AG04450 (cell line): ENCODE measurements at regions of chr6 and their contacts with region 1.

Region 1: DNA sequence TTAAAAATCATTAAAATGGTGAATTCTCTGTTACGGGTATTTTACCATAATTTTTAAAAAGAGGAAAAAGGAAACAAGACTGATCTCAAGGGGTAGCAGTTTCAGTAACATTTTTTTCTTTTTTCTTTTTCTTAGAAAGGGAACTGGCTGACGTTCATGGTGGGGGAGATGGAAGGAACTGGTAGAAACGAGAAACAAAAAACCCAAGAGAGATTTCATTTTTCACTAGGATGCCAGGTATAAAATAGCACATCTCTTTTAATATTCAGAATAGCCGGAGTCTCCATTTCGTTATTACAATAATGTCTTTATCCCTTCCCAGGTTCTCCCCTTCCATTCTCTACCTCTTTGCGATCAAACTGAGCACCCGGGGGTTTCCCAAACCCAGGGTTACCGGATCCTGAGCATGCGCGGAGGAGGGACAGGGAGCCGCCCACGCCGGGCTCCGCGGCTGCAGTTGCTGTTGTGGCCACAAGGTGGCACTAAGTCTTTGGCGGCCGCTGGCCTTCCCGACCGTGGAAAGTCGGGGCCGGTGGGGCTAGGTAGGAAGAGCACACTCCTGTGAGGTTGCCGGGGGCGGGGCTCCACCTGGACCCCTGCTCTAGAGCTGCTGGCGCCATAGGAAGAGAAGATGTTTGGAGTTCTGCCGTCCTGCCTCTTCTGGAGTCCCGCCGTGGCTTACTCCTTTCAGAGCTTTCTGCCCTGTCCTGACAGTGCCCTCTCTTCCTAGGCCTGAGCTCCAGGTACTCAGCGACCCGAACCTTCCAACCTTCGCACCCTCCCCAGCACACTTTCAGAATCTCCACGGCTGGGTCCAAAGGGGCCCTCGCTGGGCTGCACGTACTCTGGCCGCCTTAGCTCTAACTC is 146.8 kb downstream of the SH3BGRL2 start:
- DNase-seq: peak; percentile 8
- H3K4me3 ChIP-seq: peak overlapping the region; percentile 45
- H3K27ac ChIP-seq: no peak overlapping the region
- H3K27me3 ChIP-seq: no peaks in the 10 kb centered on the region
- CTCF ChIP-seq: peak; percentile 98

Region 2: GRCh38 chr6:79546186-79546585 is 231.8 kb before region 1 on chr6:
- CTCF ChIA-PET with region 1: no interaction called
- POLR2A ChIA-PET with region 1: no interaction called
- DNase-seq: no peak
- H3K4me3 ChIP-seq: no peak overlapping the region
- H3K27ac ChIP-seq: no peak overlapping the region
- H3K27me3 ChIP-seq: no peaks in the 10 kb centered on the region
- CTCF ChIP-seq: no peak

Region 3: GRCh38 chr6:79764747-79765146 is 13.2 kb before region 1 on chr6:
- CTCF ChIA-PET with region 1: interaction called, 12 read pairs
- POLR2A ChIA-PET with region 1: no interaction called
- DNase-seq: no peak
- H3K4me3 ChIP-seq: no peak overlapping the region
- H3K27ac ChIP-seq: no peak overlapping the region
- H3K27me3 ChIP-seq: no peaks in the 10 kb centered on the region
- CTCF ChIP-seq: no peak

Region 4: DNA sequence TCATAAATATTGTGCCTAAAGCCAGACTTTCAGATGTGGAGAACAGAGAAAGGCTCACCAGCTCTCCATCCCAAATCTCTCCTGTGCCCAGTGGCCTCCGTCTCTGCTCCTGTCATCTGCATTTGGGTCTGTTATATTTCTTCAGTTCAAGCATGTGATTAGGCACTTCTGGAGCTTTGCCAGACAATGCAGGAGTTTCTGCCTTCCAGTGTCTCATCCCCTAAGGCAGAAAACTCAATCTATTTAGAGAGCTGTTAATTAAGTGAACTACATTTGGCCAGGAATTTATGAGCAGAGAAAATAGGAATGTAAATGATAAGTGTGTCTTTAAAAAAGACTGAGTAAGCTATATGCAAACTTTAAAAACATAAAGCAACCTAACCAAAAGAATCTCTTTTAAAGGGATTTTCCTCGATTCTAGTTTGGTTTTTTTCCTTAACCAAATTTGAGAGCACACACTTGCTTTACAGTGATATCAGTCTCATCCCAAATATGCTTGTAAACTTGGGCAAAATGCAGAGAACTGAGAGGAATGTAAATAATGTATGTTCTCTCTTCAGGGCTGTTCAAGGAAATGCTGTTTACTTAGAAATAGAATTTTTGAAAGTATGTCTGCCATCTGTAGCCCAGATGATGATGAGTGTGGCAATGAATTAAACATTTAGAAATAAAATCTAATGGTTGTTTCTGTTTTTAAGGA is 55.5 kb after region 1 on chr6:
- CTCF ChIA-PET with region 1: no interaction called
- POLR2A ChIA-PET with region 1: no interaction called
- DNase-seq: no peak
- H3K4me3 ChIP-seq: no peak overlapping the region
- H3K27ac ChIP-seq: no peak overlapping the region
- H3K27me3 ChIP-seq: no peaks in the 10 kb centered on the region
- CTCF ChIP-seq: no peak